ENCODE measurements at regions of chr11 and their contacts with region 1.

Region 1: GRCh38 chr11:12813371-12814225 is 139.4 kb downstream of the TEAD1 start:
- DNase-seq: peak; percentile 88
- ATAC-seq: peak; percentile 13
- H3K4me3 ChIP-seq: no peak overlapping the region
- H3K27ac ChIP-seq: peak overlapping the region; percentile 76; the same call in 1 of the 2 replicates
- H3K4me1 ChIP-seq: peaks cover 53% of the 10 kb centered on the region
- H3K27me3 ChIP-seq: no peaks in the 10 kb centered on the region
- CTCF ChIP-seq: no peak
- POLR2A ChIP-seq: no peak
- RAD21 ChIP-seq: no peak

Region 2: GRCh38 chr11:12664385-12664784 is 149.2 kb before region 1 on chr11:
- CTCF ChIA-PET with region 1: no interaction called
- POLR2A ChIA-PET with region 1: no interaction called
- dilution Hi-C with region 1: no loop called
- in situ Hi-C with region 1: no loop called
- intact Hi-C with region 1: no loop called
- DNase-seq: peak; percentile 56
- ATAC-seq: peak; percentile 75
- H3K4me3 ChIP-seq: no peak overlapping the region
- H3K27ac ChIP-seq: no peak overlapping the region
- H3K4me1 ChIP-seq: no peaks in the 10 kb centered on the region
- H3K27me3 ChIP-seq: no peaks in the 10 kb centered on the region
- CTCF ChIP-seq: peak; percentile 14; the same call in 1 of the 2 replicates
- POLR2A ChIP-seq: no peak
- RAD21 ChIP-seq: no peak

Region 3: DNA sequence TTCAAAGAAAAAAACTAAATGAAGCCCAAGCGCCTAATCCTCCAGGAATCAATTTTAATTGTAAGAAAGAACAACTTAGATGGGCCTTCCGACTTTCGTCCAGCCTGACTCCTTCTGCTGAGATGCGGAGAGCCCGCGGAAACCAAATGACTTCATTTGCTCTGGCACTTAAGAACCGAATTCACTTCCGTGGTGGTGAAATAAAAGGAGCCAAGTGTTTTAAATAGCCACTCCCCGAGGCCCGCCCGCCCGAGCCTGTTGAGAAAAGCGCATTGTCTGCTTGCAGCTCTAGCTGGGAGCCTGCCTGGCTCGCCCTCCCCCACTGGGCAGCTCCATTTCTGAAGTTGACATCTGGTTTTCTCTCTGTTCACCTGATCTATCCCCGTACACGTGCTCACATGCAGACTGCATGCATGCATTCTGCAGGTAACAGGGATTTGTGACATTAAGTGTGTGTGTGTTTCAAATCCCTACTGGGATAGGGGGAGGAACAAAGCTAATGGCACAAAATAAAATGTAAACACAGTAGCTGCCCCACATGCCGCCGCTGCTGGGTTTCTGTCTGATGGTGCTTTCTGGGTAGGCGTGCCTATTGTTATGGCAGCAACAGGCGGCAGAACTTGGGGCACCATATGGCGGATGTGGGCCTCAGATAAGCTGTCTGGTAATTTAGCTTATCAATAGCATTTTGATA is 133.2 kb before region 1 on chr11:
- CTCF ChIA-PET with region 1: no interaction called
- POLR2A ChIA-PET with region 1: no interaction called
- dilution Hi-C with region 1: no loop called
- in situ Hi-C with region 1: no loop called
- intact Hi-C with region 1: loop called (anchors 2 kb)
- DNase-seq: peak; percentile 91
- ATAC-seq: peak; percentile 66
- H3K4me3 ChIP-seq: no peak overlapping the region
- H3K27ac ChIP-seq: peak overlapping the region; percentile 61; the same call in 1 of the 2 replicates
- H3K4me1 ChIP-seq: peaks cover 36% of the 10 kb centered on the region
- H3K27me3 ChIP-seq: no peaks in the 10 kb centered on the region
- CTCF ChIP-seq: no peak
- POLR2A ChIP-seq: peak; percentile 73
- RAD21 ChIP-seq: no peak

Region 4: GRCh38 chr11:13238879-13239514 is 425.4 kb after region 1 on chr11:
- CTCF ChIA-PET with region 1: no interaction called
- POLR2A ChIA-PET with region 1: no interaction called
- dilution Hi-C with region 1: no loop called
- in situ Hi-C with region 1: no loop called
- intact Hi-C with region 1: no loop called
- DNase-seq: peak; percentile 41
- ATAC-seq: peak; percentile 81
- H3K4me3 ChIP-seq: no peak overlapping the region
- H3K27ac ChIP-seq: no peak overlapping the region
- H3K4me1 ChIP-seq: no peaks in the 10 kb centered on the region
- H3K27me3 ChIP-seq: no peaks in the 10 kb centered on the region
- CTCF ChIP-seq: peak; percentile 76
- POLR2A ChIP-seq: no peak
- RAD21 ChIP-seq: peak; percentile 57

Measured in IMR-90 (cell line).